AG04450 (cell line): ENCODE measurements at regions of chr19 and their contacts with region 1.

Region 1: DNA sequence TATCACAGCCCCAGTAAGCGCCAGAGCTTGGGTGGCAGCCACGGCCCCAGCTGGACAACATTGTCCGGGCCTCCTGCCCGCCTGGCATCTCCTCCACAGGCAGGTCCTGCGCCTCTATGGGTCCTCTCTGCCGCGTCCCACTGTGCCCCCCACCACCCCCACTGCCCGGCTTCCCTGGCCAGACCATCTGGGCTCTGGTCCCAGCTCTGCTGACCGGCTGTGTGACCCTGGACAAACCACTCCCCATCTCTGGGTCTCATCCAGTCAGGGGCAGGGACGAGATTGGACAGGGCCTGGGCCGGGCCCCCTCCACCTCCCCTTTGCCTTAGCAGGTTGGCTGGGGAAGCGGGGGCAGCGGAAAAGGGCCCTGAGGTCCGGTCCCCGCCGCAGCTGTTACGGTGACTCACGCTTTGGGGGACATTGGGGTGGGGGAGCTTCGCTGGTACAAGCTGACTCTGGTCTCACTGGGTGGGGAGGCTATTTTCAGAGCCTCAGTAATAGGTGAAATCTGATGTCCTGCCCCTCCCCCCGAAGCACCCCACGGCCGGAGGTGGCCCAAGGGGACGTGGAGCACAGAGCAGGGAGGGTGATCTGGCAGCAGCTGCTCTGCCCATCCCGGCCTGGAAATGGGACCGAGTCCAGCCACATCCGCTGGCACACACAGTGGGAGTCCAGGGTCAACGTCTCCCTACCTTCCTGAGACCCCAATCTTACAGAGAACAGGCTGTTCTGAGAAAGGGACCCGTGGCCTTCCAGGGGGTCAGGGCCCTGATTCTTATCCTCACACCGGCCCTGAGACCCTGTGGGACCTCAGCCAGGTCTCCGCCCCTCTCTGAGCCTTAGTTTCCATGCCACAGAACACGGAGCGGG is 9.1 kb downstream of the NFIC start:
- DNase-seq: no peak
- H3K4me3 ChIP-seq: peak overlapping the region; percentile 32
- H3K27ac ChIP-seq: peak overlapping the region; percentile 65
- H3K27me3 ChIP-seq: no peaks in the 10 kb centered on the region
- CTCF ChIP-seq: no peak

Region 2: GRCh38 chr19:3336680-3337523 is 38.6 kb before region 1 on chr19:
- CTCF ChIA-PET with region 1: no interaction called
- POLR2A ChIA-PET with region 1: interaction called, 13 read pairs
- DNase-seq: peak; percentile 18
- H3K4me3 ChIP-seq: no peak overlapping the region
- H3K27ac ChIP-seq: peak overlapping the region; percentile 70
- H3K27me3 ChIP-seq: no peaks in the 10 kb centered on the region
- CTCF ChIP-seq: no peak

Region 3: GRCh38 chr19:3360421-3361383 is 14.8 kb before region 1 on chr19:
- CTCF ChIA-PET with region 1: no interaction called
- POLR2A ChIA-PET with region 1: no interaction called
- DNase-seq: no peak
- H3K4me3 ChIP-seq: peak overlapping the region; percentile 71
- H3K27ac ChIP-seq: peak overlapping the region; percentile 11
- H3K27me3 ChIP-seq: peaks cover 2% of the 10 kb centered on the region
- CTCF ChIP-seq: no peak

Region 4: DNA sequence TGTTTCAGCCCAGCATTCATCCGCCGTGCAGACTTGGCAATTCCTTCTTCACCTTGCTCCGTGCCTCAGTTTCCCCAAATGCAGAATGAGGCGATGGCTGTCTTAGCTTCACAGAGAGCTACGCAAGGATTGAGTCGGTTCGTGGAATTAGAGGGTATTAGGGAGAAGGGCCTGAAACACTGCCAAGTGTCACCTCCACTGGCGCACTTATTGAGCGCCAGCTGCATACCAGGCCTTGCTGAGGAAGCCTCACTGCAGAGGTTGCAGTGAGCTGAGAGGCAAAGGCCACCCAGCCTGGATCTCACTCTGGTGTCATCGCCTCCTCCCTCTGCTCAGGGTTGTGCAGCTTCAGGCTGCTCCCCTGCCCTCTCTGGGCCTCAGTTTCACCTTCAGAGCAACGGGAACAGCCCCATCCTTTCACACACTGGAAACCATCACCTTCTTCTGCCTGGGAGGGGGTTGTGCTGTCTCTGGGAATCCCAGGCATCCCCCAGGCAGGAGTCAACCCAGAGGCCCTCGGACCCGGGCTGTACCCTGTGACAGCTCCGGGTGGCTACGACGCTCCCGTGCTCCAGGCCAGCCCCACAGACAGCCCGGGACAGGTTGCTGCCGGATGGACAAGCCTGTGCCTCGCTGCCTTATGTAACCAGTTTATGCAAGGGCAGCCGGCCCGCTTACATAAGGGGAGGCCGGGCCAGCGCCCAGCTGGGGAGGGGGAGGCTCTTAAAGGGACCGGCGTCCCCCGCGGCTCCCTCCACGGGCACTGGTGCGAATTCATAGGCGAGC is 22.9 kb after region 1 on chr19:
- CTCF ChIA-PET with region 1: no interaction called
- POLR2A ChIA-PET with region 1: no interaction called
- DNase-seq: no peak
- H3K4me3 ChIP-seq: no peak overlapping the region; the same call in 1 of the 2 replicates
- H3K27ac ChIP-seq: peak overlapping the region; percentile 21
- H3K27me3 ChIP-seq: no peaks in the 10 kb centered on the region
- CTCF ChIP-seq: no peak

Region 5: DNA sequence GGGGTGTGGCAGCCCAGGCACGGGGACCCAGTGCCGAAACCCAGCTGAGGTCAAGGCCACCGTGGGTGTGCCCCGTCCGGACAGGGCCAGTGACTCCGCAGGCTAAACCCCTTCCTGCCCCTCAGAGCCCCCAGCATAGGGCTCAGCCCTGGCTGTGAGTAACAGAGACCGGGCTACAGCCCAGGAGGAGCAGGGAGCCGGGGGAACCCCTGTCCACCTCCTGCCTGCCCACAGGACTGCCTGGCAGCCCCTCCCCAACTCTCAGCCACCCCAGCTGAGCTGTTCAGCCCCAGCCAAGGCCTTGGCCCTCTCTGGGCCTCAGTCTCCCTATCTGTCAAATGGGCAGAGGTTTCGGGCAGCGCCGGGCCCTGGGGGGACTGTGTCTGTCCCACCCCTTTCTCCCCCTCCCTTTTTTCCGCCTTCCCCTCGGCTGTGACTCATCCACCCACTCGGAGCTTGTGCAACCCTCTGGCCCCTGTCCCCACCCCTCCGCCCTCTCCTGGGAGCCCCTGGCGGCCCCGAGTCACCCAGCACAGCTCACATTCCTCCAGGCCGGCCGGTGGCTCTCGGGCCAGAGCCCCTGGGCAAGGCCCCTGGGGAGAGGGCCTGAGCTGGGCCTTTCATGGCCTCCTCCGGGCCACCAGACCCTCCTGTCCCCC is 682.7 kb after region 1 on chr19:
- CTCF ChIA-PET with region 1: no interaction called
- POLR2A ChIA-PET with region 1: interaction called, 14 read pairs
- DNase-seq: peak; percentile 48
- H3K4me3 ChIP-seq: peak overlapping the region; percentile 22; the same call in 1 of the 2 replicates
- H3K27ac ChIP-seq: peak overlapping the region; percentile 84
- H3K27me3 ChIP-seq: no peaks in the 10 kb centered on the region
- CTCF ChIP-seq: peak; percentile 20